Activated T-helper 2 cell treated with anti-CD3 and anti-CD28 coated beads, Interferon-gamma antibody, Interleukin-2, Interleukin-4, amounts not matched to agents 10 μg/mL and 5 μg/mL and 100 μg/mL, durations not matched to agents 14 hours and 24 hours and 36 hours (primary cell): ENCODE measurements at regions of chr3 and their contacts with region 1.

Region 1: DNA sequence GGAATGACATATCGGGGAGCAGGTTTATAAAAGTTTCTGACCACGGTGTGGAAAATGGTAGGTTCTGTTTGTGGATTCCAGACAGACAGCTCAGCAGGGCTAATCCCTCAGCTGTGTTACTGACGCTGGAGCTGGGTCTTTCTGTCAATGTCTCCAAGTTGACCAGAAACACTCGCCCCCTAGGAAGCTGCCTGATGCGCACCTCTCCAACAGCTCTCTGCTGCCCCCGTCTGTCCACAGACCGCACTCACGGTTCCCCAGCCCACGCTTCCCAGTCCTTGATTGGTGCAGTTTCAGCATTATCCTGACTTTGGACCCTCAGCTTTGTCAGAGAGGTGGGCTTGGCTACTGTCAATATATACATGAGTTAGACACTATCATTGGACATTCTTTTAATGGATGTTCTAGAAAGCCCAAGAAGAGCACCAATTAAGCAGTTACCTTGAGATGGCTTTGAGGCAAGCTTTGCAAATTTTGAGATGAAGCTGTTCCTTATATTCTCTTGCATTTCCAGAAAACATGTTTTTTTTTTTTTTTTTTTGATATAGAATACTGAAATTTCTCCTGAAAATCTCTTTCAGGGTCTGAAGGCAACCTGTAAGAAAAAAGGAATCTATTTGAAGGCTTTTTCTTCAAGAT is 98.9 kb upstream of the TBC1D5 start:
- DNase-seq: peak; percentile 52
- H3K4me3 Mint-ChIP-seq: no peak overlapping the region
- H3K27ac Mint-ChIP-seq: no peak overlapping the region
- H3K4me1 Mint-ChIP-seq: no peaks in the 10 kb centered on the region
- H3K27me3 Mint-ChIP-seq: peaks cover 5% of the 10 kb centered on the region

Region 2: GRCh38 chr3:17258823-17259436 is 582.4 kb before region 1 on chr3:
- intact Hi-C with region 1: loop called (anchors 1 kb)
- DNase-seq: no peak
- H3K4me3 Mint-ChIP-seq: no peak overlapping the region
- H3K27ac Mint-ChIP-seq: no peak overlapping the region
- H3K4me1 Mint-ChIP-seq: no peaks in the 10 kb centered on the region
- H3K27me3 Mint-ChIP-seq: no peaks in the 10 kb centered on the region

Region 3: DNA sequence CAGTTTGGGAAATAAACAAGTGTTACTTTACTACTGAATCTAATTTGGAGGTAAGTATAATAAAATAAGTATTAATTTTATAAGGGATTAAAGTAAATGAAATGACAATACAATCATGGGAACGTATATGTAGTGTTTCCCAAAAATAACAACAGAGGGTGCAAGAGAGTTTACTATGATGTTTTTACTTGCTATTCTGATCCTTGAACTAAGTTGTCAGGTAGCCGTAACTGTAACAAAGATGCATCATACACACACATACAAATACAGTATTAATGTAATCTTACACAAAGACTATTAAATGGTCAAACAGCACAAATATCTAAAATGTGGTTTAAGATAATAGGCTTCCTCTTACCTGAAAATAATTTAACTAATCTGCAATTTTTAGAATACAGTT is 410.3 kb before region 1 on chr3:
- intact Hi-C with region 1: loop called (anchors 1 kb)
- DNase-seq: no peak
- H3K4me3 Mint-ChIP-seq: no peak overlapping the region
- H3K27ac Mint-ChIP-seq: no peak overlapping the region
- H3K4me1 Mint-ChIP-seq: no peaks in the 10 kb centered on the region
- H3K27me3 Mint-ChIP-seq: no peaks in the 10 kb centered on the region

Region 4: GRCh38 chr3:17645072-17645698 is 196.1 kb before region 1 on chr3:
- intact Hi-C with region 1: loop called (anchors 2 kb)
- DNase-seq: no peak
- H3K4me3 Mint-ChIP-seq: no peak overlapping the region
- H3K27ac Mint-ChIP-seq: no peak overlapping the region
- H3K4me1 Mint-ChIP-seq: no peaks in the 10 kb centered on the region
- H3K27me3 Mint-ChIP-seq: no peaks in the 10 kb centered on the region